ENCODE measurements at regions of chr4 and their contacts with region 1.

Region 1: DNA sequence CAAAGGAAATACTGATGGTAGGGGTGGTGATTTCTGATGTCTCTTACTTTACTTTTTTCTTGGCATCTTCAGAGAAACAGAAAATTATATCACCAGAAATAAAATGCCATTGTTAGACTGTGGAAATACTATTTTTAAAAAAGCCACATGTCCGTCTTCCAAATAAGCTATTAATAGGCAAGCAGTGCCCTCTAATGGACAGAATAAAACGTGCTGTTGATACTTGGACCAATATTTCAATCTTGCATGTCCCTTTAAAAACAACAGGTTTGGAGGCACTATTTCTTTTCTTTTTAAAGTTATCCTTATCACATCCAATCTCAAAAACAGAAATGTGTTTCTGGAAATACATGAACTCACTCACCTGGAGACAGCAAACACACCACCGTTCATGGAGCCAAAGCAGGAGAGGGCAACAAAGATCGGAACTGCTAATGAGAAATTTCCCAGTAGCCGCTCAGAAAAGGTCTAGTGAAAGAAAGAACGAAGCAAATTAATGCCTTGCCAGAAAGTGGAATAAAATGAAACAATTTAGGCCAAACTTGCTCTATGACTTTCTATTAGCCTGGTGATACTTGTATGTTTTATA is 59.2 kb downstream of the SLC7A11 start:
- DNase-seq: peak in 1 of 2 donors; percentile 23
- ATAC-seq: peak in 5 of 8 donors; percentile 49 to 78 (median 64)
- H3K4me3 ChIP-seq: no peak overlapping the region
- H3K27ac ChIP-seq: no peak overlapping the region
- H3K4me1 ChIP-seq: peaks cover 0 to 21% (median 15%) of the 10 kb centered on the region in 9 donors
- H3K27me3 ChIP-seq: no peaks in the 10 kb centered on the region
- CTCF ChIP-seq: peak; percentile 24 to 78 (median 68)

Region 2: GRCh38 chr4:137124278-137124932 is 1058.5 kb before region 1 on chr4:
- intact Hi-C with region 1: loop called in 2 of 10 experiments (anchors 10 kb)
- DNase-seq: peak in 1 of 2 donors; percentile 5
- ATAC-seq: peak; percentile 78 to 97 (median 88)
- H3K4me3 ChIP-seq: peak overlapping the region; percentile 2 to 52 (median 30)
- H3K27ac ChIP-seq: peak overlapping the region in 1 of 10 donors; percentile 14
- H3K4me1 ChIP-seq: no peaks in the 10 kb centered on the region
- H3K27me3 ChIP-seq: no peaks in the 10 kb centered on the region
- CTCF ChIP-seq: peak in 8 of 9 donors; percentile 16 to 80 (median 64)

Region 3: GRCh38 chr4:137866671-137867070 is 316.3 kb before region 1 on chr4:
- intact Hi-C with region 1: no loop called
- DNase-seq: no peak
- ATAC-seq: no peak
- H3K4me3 ChIP-seq: no peak overlapping the region
- H3K27ac ChIP-seq: peak overlapping the region in 1 of 10 donors; percentile 19
- H3K4me1 ChIP-seq: no peaks in the 10 kb centered on the region
- H3K27me3 ChIP-seq: no peaks in the 10 kb centered on the region
- CTCF ChIP-seq: no peak

Region 4: DNA sequence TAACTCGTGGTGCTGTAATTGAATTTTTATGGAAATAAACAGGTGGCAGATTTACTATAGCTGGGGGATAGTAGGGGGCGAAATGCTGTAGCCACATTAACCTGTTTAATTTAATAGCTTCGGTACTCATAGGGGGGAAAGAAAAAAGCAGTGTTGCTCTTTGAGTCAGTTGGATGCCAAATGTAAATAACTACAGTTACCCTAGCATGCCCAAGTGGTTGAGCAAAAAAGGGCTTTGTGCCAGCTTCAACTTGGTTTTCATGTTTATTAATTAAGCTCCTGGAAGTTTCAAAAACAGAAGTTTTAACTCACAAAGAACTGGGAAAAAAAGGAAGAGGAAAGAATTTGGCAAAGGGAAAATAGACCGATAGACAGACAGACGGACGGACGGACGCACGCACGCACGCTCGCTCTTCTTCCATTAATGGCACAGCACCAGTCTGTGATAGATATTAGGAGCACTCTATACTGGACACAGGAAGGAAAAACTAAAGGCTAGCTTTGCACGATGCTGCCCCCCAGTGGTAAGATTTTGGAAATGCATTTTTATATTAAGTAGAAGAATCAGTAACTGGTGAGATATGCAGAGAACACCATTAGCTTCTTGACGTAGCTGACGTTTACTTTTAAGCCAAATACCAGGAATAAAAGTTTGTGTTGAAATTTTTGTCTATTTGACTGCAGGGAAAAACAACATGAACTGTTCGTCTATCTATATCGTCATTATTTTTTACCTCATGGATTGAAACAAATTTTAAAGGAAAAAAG is 92.6 kb before region 1 on chr4:
- intact Hi-C with region 1: loop called in 3 of 10 experiments (anchors 1 to 5 kb)
- DNase-seq: peak; percentile 14 to 61
- ATAC-seq: peak; percentile 65 to 85 (median 80)
- H3K4me3 ChIP-seq: peak overlapping the region in 4 of 10 donors; percentile 24 to 26 (median 25)
- H3K27ac ChIP-seq: no peak overlapping the region
- H3K4me1 ChIP-seq: peaks cover 0 to 8% (median 0%) of the 10 kb centered on the region in 9 donors
- H3K27me3 ChIP-seq: no peaks in the 10 kb centered on the region
- CTCF ChIP-seq: peak; percentile 73 to 85 (median 85)

Region 5: GRCh38 chr4:138405934-138406567 is 223.1 kb after region 1 on chr4:
- intact Hi-C with region 1: loop called in 1 of 10 experiments (anchors 10 kb)
- DNase-seq: no peak
- ATAC-seq: peak in 3 of 8 donors; percentile 35 to 42 (median 35)
- H3K4me3 ChIP-seq: no peak overlapping the region
- H3K27ac ChIP-seq: peak overlapping the region in 1 of 10 donors; percentile 39
- H3K4me1 ChIP-seq: peaks cover 0 to 30% (median 4%) of the 10 kb centered on the region in 9 donors
- H3K27me3 ChIP-seq: no peaks in the 10 kb centered on the region
- CTCF ChIP-seq: no peak

Region 6: GRCh38 chr4:138864961-138865720 is 682.2 kb after region 1 on chr4:
- intact Hi-C with region 1: loop called in 3 of 10 experiments (anchors 5 to 10 kb)
- DNase-seq: no peak
- ATAC-seq: no peak
- H3K4me3 ChIP-seq: no peak overlapping the region
- H3K27ac ChIP-seq: no peak overlapping the region
- H3K4me1 ChIP-seq: no peaks in the 10 kb centered on the region
- H3K27me3 ChIP-seq: peaks cover 0 to 13% (median 4%) of the 10 kb centered on the region in 7 donors
- CTCF ChIP-seq: no peak